Endothelial cell of umbilical vein (primary cell): ENCODE measurements at regions of chr1 and their contacts with region 1.

Region 1: DNA sequence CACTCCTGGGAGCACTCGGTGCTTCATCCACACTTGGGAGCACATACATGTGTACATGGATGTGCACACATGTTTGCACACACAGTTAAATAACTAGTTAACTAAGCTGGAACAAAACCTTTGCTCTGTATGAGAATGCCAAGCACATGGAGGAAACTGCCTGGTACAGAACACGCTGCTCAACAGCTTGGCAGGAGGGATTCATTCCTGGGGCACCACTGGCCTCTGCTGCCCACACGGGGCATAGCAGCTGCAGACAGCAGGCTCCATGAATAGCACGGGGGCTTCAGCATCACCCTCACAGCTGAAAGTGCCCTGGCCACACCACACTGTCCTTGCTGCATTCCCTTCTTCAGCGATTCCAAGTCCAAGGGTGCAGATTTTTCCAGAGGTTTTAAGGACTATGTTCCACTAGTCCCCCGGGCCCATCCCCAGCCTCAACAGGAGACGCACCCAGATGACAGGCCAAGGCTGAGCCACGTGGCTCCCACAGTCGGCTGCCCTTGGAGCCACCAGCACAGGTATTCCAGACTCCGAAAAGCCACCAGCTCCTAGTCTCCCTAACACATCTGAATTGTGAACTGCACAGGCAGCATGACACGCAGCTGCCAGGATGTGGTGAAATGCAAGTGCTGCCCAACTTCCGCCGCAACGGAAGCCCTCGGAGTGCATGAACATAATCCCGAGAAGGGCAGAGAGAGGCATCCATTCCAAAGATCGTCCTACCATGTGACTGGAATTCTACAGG is 16.9 kb downstream of the NPHP4 start:
- DNase-seq: peak; percentile 57
- H3K4me3 ChIP-seq: no peak overlapping the region
- H3K27ac ChIP-seq: no peak overlapping the region
- H3K4me1 ChIP-seq: no peaks in the 10 kb centered on the region
- H3K27me3 ChIP-seq: no peaks in the 10 kb centered on the region
- CTCF ChIP-seq: peak; percentile 71 to 90
- POLR2A ChIP-seq: no peak

Region 2: GRCh38 chr1:4652631-4653327 is 1322.5 kb before region 1 on chr1:
- CTCF ChIA-PET with region 1: interaction called, 5 read pairs
- POLR2A ChIA-PET with region 1: no interaction called
- dilution Hi-C with region 1: no loop called
- intact Hi-C with region 1: loop called (anchors 1 kb)
- DNase-seq: peak; percentile 15
- H3K4me3 ChIP-seq: no peak overlapping the region
- H3K27ac ChIP-seq: no peak overlapping the region
- H3K4me1 ChIP-seq: no peaks in the 10 kb centered on the region
- H3K27me3 ChIP-seq: peaks cover 20 to 24% of the 10 kb centered on the region in 2 experiments
- CTCF ChIP-seq: peak; percentile 86 to 97
- POLR2A ChIP-seq: no peak

Region 3: GRCh38 chr1:5611851-5612250 is 363.5 kb before region 1 on chr1:
- CTCF ChIA-PET with region 1: no interaction called
- POLR2A ChIA-PET with region 1: no interaction called
- dilution Hi-C with region 1: no loop called
- intact Hi-C with region 1: no loop called
- DNase-seq: no peak
- H3K4me3 ChIP-seq: no peak overlapping the region
- H3K27ac ChIP-seq: no peak overlapping the region
- H3K4me1 ChIP-seq: no peaks in the 10 kb centered on the region
- H3K27me3 ChIP-seq: no peaks in the 10 kb centered on the region
- CTCF ChIP-seq: no peak
- POLR2A ChIP-seq: no peak

Region 4: DNA sequence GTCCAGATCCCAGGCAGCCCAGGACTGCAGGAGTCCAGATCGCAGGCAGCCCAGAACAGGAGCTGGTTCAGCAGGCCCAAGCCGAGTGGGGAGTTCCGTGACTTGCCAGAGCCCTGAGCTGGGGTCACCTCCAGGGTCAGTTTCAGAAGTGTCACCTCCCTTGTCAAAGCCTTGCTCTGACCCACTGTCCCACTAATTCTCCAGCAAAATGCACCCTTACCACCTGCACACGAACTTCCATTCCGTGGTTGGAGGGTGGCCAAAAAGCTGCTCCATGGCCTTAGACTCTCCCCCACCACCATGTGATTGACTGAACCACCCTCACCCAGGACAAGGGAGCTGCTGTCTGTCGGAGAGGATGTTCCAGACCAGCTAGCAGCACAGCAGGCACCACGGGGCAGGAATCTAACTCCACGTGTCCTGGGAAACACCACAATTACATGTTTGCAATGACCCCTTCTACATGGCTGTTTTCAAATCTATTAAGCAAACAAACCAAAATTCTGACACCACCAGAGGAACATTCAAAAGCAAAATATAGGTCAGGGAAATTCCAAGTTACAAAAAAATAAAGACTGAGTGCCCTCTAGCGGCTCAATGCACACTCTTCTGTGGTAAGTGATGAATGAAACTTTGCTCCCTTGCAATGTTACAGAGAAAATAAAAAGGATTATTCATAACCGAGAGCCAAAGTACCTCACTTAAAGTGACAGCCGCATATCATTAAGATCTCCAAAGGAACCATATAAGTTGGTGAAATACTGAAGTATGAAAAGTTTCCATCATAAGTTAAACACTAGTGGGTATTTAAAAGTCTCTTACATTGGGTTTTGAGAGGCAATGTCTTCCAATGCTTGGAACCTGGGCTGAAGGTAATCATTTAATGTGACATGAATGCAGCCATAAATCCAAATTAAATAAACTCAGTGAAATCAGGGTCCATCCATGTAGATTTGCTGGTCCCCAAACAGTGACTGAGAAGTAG is 59.4 kb before region 1 on chr1:
- CTCF ChIA-PET with region 1: interaction called, 4 read pairs
- POLR2A ChIA-PET with region 1: no interaction called
- dilution Hi-C with region 1: no loop called
- intact Hi-C with region 1: loop called (anchors 1 kb)
- DNase-seq: peak; percentile 40
- H3K4me3 ChIP-seq: no peak overlapping the region
- H3K27ac ChIP-seq: no peak overlapping the region
- H3K4me1 ChIP-seq: no peaks in the 10 kb centered on the region
- H3K27me3 ChIP-seq: no peaks in the 10 kb centered on the region
- CTCF ChIP-seq: peak; percentile 46 to 61
- POLR2A ChIP-seq: no peak